Posterior vena cava (tissue), 2 donors: ENCODE measurements at regions of chr19 and their contacts with region 1.

Region 1: DNA sequence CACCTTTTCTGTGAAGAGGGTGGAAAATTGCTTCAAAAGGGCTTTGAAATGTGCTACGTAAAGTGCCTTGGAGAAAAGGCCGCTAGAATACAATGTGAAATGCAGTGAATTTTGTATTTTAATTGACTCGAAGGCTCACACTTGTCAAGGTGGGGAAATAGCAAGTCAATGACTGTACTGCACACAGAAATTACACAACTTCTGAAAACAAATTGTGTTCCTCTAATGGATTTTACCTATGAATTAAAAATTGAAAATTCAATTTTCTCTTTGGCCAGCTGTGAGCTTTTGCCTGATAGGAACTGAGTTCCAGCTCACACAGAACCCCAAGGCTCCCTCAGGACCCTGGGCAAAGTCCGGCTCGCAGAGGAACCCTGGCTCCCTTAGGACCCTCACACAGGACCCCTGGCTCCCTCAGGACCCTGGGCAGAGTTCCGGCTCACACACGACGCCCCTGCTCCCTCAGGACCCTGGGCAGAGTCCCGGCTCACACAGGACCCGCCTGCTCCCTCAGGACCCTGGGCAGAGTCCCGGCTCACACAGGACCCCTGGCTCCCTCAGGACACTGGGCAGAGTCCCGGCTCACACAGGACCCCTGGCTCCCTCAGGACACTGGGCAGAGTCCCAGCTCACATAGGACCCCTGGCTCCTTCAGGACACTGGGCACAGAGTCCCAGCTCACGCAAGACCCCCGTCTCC is 324.9 kb downstream of the UQCRFS1 start:
- DNase-seq: no peak

Region 2: GRCh38 chr19:28152195-28152594 is 735.9 kb before region 1 on chr19:
- intact Hi-C with region 1: loop called in 1 of 2 experiments (anchors 5 kb)
- DNase-seq: no peak

Region 3: DNA sequence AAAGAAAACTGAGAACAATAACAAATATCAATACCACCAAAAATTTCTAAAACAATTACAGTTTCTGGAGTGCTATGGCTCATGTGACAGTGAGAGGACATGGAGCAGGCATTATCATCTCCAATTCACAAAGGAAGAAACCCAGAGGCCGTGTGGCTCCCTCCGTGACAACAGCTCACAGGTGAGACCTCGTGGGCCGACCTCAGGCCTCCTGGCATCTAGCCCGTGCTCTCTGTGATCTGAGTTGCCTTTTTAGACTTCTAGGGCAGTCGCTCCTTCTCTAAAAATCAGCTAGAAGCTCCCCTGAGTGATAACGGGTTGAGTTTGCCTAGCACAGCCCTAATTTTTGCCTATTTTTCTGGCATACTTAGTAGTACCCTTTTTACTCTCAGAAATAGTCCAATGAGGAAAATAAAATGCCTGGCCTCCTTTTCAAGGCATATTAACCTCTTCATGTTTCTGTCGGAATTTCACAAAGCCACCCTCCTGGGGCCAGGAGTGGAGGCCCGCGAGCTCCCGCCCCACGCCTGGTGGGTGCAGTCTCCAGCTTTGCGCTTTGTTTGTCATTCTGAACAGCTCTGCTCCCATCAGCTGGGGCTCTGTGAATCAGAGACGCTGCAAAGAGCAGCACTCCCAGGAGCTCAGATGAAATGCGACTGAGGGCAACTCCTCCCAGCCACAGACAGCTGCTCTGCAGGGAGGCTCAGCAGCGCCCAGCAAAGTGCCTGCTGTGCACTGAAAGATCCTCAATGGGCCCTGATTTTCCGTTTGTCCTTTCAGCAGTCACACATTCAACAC is 32.4 kb after region 1 on chr19:
- intact Hi-C with region 1: loop called in 1 of 2 experiments (anchors 2 kb)
- DNase-seq: no peak

Region 4: DNA sequence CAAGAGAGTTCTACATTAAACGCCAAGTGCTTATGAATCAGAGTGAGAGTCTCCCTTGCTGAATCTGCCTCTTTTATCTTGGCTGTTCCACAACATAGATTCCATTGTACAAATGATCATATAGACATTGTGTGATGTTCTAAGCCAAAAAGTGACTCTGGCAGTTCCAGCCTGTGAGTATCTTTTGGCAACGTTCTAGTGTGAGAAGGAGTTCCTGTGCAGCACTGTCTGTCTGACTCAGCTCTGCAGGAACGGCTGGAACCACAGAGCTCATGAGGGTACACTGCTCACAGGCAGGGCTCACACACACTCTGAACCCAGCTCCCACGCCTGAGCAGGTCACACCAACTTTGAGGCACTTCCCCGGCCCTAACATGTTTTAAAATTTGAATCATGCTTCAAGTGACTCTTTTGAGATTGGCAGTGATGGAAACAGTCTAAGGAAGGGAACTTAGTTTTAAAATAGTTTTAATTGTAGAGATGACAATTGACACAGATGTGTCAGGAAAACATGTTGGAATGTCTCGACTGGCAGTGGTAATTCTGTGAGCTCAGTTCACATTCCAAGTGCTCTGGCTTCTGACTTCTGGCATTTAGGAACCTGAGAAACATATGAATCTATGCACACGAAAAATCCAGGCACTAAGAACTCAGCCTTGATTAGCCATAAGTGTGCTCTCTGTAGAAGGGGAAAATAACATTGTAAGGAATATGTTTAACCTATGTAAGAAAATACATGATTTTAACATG is 52.9 kb after region 1 on chr19:
- intact Hi-C with region 1: no loop called
- DNase-seq: no peak

Region 5: GRCh38 chr19:29054886-29055675 is 167.0 kb after region 1 on chr19:
- intact Hi-C with region 1: no loop called
- DNase-seq: no peak